ENCODE measurements at regions of chr13 and their contacts with region 1.

Region 1: GRCh38 chr13:102870677-102871415 is 25.0 kb downstream of the ERCC5 start:
- DNase-seq: peak; percentile 41
- H3K4me3 ChIP-seq: no peak overlapping the region
- H3K27ac ChIP-seq: no peak overlapping the region
- H3K4me1 ChIP-seq: peaks cover 23% of the 10 kb centered on the region
- H3K27me3 ChIP-seq: no peaks in the 10 kb centered on the region
- CTCF ChIP-seq: peak; percentile 80

Region 2: DNA sequence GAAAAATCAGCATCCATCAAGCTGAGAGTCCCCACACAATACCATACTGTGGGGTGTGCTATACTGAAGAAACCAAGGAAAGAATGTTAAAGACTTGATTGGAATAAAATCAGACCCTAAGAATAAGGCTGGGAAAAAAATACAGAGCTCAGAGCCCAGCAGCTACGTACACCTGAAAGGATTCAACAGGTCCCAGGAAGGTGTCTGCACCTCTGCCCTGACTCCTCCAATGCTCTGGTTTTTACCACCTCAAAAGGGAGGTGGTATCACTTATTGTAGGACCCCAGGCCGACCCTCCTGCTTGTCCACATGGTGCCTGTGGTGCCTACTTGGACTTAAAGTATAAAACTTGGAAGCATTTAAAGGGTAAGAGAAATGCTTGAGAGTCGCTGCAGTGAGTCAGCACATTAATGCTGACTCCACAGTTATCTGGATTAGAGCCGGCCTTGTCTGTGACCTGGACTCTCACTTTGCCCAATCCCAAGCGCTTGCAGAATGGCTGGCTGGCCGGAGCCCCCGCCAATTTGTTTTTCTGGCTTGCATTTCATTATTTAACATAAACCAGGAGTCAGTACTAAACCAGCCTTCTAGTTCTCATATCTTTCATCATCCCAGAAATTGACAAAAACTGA is 579.1 kb before region 1 on chr13:
- CTCF ChIA-PET with region 1: no interaction called
- dilution Hi-C with region 1: no loop called
- in situ Hi-C with region 1: no loop called
- intact Hi-C with region 1: no loop called
- DNase-seq: no peak
- H3K4me3 ChIP-seq: no peak overlapping the region
- H3K27ac ChIP-seq: no peak overlapping the region
- H3K4me1 ChIP-seq: peaks cover 20% of the 10 kb centered on the region
- H3K27me3 ChIP-seq: no peaks in the 10 kb centered on the region
- CTCF ChIP-seq: no peak

Region 3: DNA sequence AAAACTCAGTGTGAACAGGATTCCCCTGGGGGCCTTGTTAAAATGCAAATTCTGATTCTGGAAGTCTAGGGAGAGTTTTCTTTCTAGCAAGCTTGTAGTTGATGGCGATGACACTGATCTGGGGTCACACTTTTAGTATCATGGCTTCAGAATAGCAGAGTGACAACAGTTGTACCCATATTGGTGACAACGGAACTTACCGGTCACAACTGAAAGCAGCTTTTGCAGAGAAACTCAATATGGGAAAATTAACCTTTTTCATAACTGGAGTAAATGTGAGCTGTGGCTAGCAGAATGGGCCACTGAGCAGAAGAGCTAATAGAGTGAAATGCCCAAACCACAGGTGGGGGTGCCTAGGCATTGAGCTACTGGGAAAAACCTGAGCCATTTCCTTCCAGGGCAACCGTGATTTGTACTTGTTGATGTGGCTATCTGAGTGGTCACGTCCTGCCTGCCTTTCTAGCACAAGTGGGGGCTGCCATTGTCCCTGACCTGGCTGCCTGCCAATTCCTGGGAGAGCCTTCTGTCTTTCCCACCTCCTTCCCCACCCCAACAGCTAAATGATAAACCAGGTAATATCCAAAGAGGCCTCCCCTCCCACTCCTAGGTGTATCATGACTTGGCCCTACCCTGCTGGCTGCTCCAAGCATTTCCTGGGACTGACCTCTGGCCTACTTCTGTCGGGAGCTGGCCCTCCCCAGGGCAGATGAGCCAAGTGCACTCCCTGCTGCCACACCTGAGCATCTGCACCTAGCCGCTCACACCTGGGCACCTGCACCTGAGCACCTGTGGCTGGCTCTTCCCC is 197.1 kb after region 1 on chr13:
- CTCF ChIA-PET with region 1: no interaction called
- dilution Hi-C with region 1: no loop called
- in situ Hi-C with region 1: no loop called
- intact Hi-C with region 1: loop called (anchors 1 kb)
- DNase-seq: peak; percentile 14
- H3K4me3 ChIP-seq: no peak overlapping the region
- H3K27ac ChIP-seq: no peak overlapping the region
- H3K4me1 ChIP-seq: peaks cover 3% of the 10 kb centered on the region
- H3K27me3 ChIP-seq: no peaks in the 10 kb centered on the region
- CTCF ChIP-seq: peak; percentile 24 to 85

Region 4: GRCh38 chr13:103140001-103140671 is 269.3 kb after region 1 on chr13:
- CTCF ChIA-PET with region 1: interaction called, 6 read pairs
- dilution Hi-C with region 1: no loop called
- in situ Hi-C with region 1: no loop called
- intact Hi-C with region 1: loop called (anchors 1 kb)
- DNase-seq: peak; percentile 33
- H3K4me3 ChIP-seq: no peak overlapping the region
- H3K27ac ChIP-seq: no peak overlapping the region
- H3K4me1 ChIP-seq: no peaks in the 10 kb centered on the region
- H3K27me3 ChIP-seq: no peaks in the 10 kb centered on the region
- CTCF ChIP-seq: peak; percentile 80 to 84